Common myeloid progenitor, CD34-positive (primary cell): ENCODE measurements at regions of chr17 and their contacts with region 1.

Region 1: GRCh38 chr17:67717624-67718329 is at the start of gene NOL11:
- DNase-seq: peak; percentile 99
- H3K4me3 ChIP-seq: peak within 1 kb of the TSS; percentile 82 to 100 (median 100)
- H3K27ac ChIP-seq: peak within 1 kb of the TSS; percentile 98 to 99
- H3K4me1 ChIP-seq: peaks cover 9 to 27% (median 23%) of the 10 kb centered on the region in 4 experiments
- H3K27me3 ChIP-seq: no peaks in the 10 kb centered on the region

Region 2: GRCh38 chr17:67824735-67825626 is 107.2 kb after region 1 on chr17 and contains the start of gene BPTF:
- CTCF ChIA-PET with region 1: interaction called, 8 read pairs
- POLR2A ChIA-PET with region 1: interaction called, 11 read pairs
- DNase-seq: peak; percentile 93 to 96 (median 96)
- H3K4me3 ChIP-seq: peak within 1 kb of the TSS; percentile 81 to 94 (median 91)
- H3K27ac ChIP-seq: peak within 1 kb of the TSS; percentile 46 to 82
- H3K4me1 ChIP-seq: peaks cover 0 to 34% (median 25%) of the 10 kb centered on the region in 4 experiments
- H3K27me3 ChIP-seq: no peaks in the 10 kb centered on the region